ENCODE measurements at regions of chr16 and their contacts with region 1.

Region 1: GRCh38 chr16:81095953-81096717 is at the start of gene GCSH:
- DNase-seq: peak; percentile 99
- H3K4me3 ChIP-seq: peak within 1 kb of the TSS; percentile 84
- H3K27ac ChIP-seq: peak within 1 kb of the TSS in 1 of 2 donors; percentile 78
- H3K4me1 ChIP-seq: peaks cover 2% of the 10 kb centered on the region
- H3K27me3 ChIP-seq: no peaks in the 10 kb centered on the region
- CTCF ChIP-seq: no peak
- EP300 ChIP-seq: no peak
- POLR2A ChIP-seq: no peak
- total RNA-seq, gene GCSH: 13.7 to 45.0 (median 26.2) TPM

Region 2: DNA sequence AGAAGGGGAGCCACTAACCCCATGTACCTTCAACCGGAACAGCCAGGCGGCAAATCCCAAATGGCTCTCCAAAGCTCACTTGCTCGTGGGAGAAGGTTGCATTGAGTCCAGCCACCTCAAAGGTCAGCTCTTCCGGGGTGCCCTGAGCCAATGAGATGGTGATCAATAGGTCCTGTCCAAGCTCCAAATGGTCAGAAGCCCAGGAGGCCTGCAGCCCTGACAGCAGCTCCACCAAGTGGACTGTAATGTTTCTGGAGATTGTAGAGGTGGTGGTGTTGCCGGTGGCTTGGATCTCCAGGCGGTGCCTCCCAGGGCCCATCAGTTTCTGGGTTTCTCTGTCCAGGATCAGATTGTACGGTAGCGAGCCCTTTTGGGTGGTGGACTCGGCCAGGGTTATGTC is 102.5 kb after region 1 on chr16:
- intact Hi-C with region 1: loop called in 1 of 4 experiments (anchors 10 kb)
- DNase-seq: no peak
- H3K4me3 ChIP-seq: no peak overlapping the region
- H3K27ac ChIP-seq: no peak overlapping the region
- H3K4me1 ChIP-seq: no peaks in the 10 kb centered on the region
- H3K27me3 ChIP-seq: no peaks in the 10 kb centered on the region
- CTCF ChIP-seq: no peak
- EP300 ChIP-seq: no peak
- POLR2A ChIP-seq: no peak

Measured in ovary (tissue), 10 donors.